Activated naive CD4-positive, alpha-beta T cell treated with anti-CD3 and anti-CD28 coated beads for 36 hours (primary cell): ENCODE measurements at regions of chrX and their contacts with region 1.

Region 1: DNA sequence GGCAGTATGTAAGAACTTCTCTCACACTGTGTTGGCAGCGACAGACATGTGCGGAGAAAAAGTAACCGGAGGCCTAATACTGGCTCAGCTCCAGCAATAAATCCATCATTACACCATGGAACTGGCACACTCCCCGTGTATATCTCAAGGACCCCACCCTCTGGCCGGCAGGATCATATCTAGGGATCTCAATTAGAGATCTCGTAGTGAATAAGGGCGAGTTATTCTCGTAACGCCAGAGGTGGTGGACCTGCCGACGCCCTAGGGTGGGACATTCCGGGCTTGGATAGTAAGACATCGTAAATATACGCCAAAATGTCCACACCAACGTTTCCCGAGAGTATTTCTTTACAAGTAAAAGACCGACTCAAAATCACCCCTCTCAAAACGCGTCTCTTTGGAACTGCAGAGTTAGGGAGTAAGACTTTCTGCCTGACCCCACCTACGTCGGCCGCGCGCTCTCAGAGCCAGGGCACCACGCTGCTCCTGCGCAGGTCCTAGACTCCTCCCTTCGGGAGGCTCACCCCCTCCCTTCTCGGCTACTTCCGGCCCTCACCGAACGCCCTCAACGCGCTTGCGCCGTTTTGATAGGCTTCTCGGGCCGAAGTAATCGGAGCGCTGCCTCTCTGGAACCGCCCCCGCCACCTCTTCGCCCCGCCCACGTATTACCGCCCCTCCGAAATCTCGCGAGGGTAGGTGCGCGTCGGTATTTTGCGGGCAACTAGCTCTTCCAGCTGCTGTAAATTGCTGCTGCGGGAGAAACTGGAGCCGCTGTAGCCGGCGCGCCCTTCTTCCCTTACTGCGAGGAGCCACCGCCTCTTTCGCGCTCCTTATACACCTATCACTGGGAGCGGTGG is at the start of gene WDR44:
- DNase-seq: peak; percentile 94
- H3K4me3 Mint-ChIP-seq: peak within 1 kb of the TSS; percentile 97
- H3K27ac Mint-ChIP-seq: peak within 1 kb of the TSS; percentile 95
- H3K4me1 Mint-ChIP-seq: peaks cover 30% of the 10 kb centered on the region
- H3K27me3 Mint-ChIP-seq: no peaks in the 10 kb centered on the region
- total RNA-seq, gene WDR44: 4.0 to 5.4 TPM

Region 2: DNA sequence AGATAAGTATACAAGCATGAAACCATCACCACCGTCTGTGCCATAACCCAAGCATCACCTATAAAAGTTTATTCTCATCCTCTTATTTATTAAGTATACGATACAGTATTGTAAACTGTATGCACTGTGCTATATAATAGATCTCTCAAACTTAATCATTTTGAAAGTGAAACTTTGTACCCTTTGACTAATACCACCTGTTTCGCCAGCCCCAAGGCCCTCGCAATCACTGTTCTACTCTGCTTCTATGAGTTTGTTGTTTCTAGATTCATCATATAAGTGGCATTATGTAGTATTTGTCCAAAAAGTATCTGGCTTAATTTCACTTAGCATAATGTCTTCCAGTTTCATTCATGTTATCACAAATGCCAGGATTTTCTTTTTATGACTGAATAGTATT is 77.9 kb after region 1 on chrX:
- CTCF ChIA-PET with region 1: no interaction called
- intact Hi-C with region 1: loop called (anchors 1 kb)
- DNase-seq: peak; percentile 12
- H3K4me3 Mint-ChIP-seq: no peak overlapping the region
- H3K27ac Mint-ChIP-seq: no peak overlapping the region
- H3K4me1 Mint-ChIP-seq: peaks cover 8% of the 10 kb centered on the region
- H3K27me3 Mint-ChIP-seq: no peaks in the 10 kb centered on the region

Region 3: DNA sequence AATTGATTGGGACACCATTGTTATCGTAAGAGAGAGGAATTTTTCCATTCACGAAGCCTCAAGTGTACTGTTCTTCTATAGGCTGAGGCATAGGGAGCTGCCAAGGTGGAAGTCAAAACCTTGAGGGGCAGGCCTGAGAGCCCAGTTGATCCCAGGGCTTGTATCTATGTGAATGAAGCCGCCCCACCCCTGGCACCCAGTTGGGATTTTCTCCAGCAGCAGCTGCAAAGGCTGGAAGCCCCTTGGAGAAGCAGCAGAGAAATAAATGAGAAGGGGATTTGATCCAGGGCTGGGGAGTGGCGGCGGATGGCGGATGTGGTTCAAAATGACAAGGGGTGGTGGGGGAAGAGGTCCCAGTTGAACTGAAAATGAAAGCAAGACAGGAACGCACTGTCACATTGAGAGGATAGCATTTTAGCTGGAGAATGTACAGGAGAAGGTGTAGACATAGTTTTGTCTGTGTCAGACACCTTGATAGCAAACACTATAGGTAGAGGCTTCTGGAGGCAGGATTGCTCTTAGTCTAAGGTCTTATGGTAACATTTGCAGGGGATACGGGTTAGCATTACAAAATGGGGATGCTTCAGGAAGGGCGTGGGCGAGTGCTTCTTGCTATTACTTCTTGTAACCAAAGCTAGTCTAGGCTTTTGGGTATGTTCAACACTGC is 182.6 kb after region 1 on chrX:
- CTCF ChIA-PET with region 1: no interaction called
- intact Hi-C with region 1: no loop called
- DNase-seq: peak; percentile 73
- H3K4me3 Mint-ChIP-seq: peak overlapping the region; percentile 79
- H3K27ac Mint-ChIP-seq: peak overlapping the region; percentile 96
- H3K4me1 Mint-ChIP-seq: peaks cover 73% of the 10 kb centered on the region
- H3K27me3 Mint-ChIP-seq: no peaks in the 10 kb centered on the region

Region 4: GRCh38 chrX:118974908-118975671 is 629.5 kb after region 1 on chrX:
- CTCF ChIA-PET with region 1: no interaction called
- intact Hi-C with region 1: loop called (anchors 5 kb)
- DNase-seq: peak; percentile 59
- H3K4me3 Mint-ChIP-seq: peak overlapping the region; percentile 83
- H3K27ac Mint-ChIP-seq: peak overlapping the region; percentile 88
- H3K4me1 Mint-ChIP-seq: peaks cover 12% of the 10 kb centered on the region
- H3K27me3 Mint-ChIP-seq: peaks cover 6% of the 10 kb centered on the region